Caki2 (cell line): ENCODE measurements at regions of chr6 and their contacts with region 1.

Region 1: GRCh38 chr6:71509191-71510005 is 220.8 kb downstream of the OGFRL1 start:
- DNase-seq: no peak

Region 2: DNA sequence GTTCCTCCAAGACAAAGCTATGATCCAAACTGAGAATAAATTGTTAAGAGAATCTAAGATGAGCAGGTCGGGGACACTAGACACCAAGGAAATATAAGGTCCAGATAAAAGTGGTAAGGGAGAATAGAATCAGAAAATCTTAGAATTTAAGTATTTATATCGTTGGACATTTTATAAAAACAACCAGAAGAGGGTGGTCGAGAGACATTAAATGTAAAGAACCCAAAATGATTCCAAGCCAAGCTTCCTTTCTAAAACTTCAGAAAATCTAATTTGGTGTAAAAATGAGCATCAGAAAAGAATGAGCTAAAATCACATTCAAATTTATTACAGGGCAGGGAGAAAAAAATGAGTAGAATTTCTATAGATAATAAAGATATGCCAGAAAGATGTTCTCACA is 318.6 kb before region 1 on chr6:
- in situ Hi-C with region 1: loop called (anchors 10 kb)
- DNase-seq: no peak

Region 3: GRCh38 chr6:71721642-71722041 is 212.2 kb after region 1 on chr6:
- in situ Hi-C with region 1: no loop called
- DNase-seq: no peak